H1 (cell line): ENCODE measurements at regions of chr19 and their contacts with region 1.

Region 1: GRCh38 chr19:10602330-10603083 is 15.4 kb upstream of the AP1M2 start:
- DNase-seq: peak in 1 of 2 experiments; percentile 89
- H3K4me3 ChIP-seq: peak overlapping the region; percentile 79 to 98 (median 88)
- H3K27ac ChIP-seq: 0 out of 2 replicates have a peak overlapping the region, but pooled peaks have one; percentile 67
- H3K4me1 ChIP-seq: peaks cover 0 to 11% (median 7%) of the 10 kb centered on the region in 4 experiments; a peak in 6 of 7 replicates
- H3K27me3 ChIP-seq: no peaks in the 10 kb centered on the region
- CTCF ChIP-seq: no peak
- EP300 ChIP-seq: no peak
- POLR2A ChIP-seq: peak in 1 of 2 experiments; percentile 59; a peak in 2 of 3 replicates
- RAD21 ChIP-seq: no peak

Region 2: DNA sequence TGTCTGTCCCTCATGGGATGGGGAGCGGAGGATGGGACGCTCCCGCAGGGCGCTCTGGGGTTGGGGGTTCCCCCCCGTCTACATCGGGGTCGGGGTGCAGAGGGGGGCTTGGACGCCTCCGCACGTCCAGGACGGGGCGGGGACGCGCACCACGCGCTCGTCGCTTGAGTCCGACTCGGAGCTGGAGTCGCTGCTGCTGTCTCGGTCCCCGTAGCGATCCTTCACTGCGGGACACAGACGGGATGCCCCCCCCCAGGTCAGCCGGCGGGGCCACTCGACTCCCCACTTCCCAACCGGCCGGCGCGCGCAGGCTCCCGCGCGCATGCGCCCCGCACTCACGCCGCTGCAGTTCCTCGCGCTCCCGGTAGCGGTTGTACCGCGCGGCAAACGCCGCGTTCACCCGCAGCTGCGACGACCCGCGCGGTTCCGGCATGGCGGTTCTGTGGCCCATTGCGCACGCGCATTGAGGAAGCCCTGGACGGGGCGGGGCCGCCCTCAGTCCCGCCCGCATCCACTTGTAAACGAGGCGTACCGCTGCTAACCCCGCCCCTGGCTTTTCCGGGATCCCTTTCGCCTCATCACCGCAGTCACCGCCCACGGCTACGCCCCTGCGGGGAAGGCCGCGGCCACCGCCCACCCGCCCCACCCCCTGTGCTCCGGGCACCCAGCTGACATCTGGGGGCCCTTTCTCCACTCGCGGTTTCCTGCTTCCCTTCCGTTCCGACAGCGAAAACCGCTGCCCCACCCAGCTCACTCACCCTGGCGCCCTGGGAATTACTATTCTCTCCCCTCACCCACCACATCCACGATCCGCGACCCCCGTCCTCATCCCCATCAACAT is 36.7 kb before region 1 on chr19 and contains the start of gene KRI1:
- CTCF ChIA-PET with region 1: no interaction called
- POLR2A ChIA-PET with region 1: no interaction called
- DNase-seq: peak; percentile 91 to 99
- H3K4me3 ChIP-seq: peak within 1 kb of the TSS; percentile 73 to 82 (median 77)
- H3K27ac ChIP-seq: peak within 1 kb of the TSS; percentile 68; the same call in 1 of the 2 replicates
- H3K4me1 ChIP-seq: peaks cover 0 to 19% (median 9%) of the 10 kb centered on the region in 4 experiments; a peak in 6 of 7 replicates
- H3K27me3 ChIP-seq: peaks cover 0 to 10% (median 7%) of the 10 kb centered on the region in 4 experiments; a peak in 4 of 7 replicates
- CTCF ChIP-seq: peak; percentile 33 to 53 (median 52)
- EP300 ChIP-seq: peak in 1 of 2 experiments; percentile 1; a peak in 1 of 3 replicates
- POLR2A ChIP-seq: peak in 1 of 2 experiments; percentile 73; a peak in 2 of 3 replicates
- RAD21 ChIP-seq: peak in 1 of 2 experiments; percentile 28; a peak in 1 of 4 replicates
- total RNA-seq, gene KRI1: 45.2 and 50.1 TPM in 2 replicates

Region 3: DNA sequence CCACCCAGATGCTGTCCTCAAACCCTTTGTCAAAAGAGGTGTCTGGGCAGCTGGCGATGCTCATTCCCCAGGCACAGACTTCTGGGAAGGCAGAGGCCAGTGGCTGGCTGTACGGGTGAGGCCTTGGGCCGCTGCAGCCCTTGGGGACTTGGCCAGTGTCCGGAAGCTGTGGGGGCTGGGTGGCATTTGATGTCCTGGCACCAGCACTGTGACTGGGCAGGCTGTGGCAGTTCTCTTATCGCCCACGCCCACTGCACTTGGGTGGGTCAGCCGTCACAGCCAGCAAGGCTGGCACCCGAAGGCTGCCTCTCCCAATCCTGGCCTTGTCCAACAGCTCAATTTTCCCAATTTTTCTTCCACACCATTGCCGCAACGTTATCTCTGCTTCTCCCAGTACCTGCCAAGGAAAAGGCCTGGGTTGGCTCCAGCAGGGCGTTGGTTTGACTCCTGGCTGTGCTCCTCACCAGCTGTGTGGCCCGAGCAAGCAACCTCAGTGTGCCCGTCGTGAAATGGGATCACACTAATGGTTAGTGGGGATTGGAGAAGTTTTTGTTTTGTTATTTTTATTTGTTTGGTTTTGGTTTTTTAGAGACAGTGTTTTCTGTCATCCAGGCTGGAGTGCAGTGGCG is 10.1 kb after region 1 on chr19:
- CTCF ChIA-PET with region 1: interaction called, 4 read pairs
- POLR2A ChIA-PET with region 1: interaction called, 15 read pairs
- DNase-seq: no peak
- H3K4me3 ChIP-seq: no peak overlapping the region
- H3K27ac ChIP-seq: no peak overlapping the region
- H3K4me1 ChIP-seq: no peaks in the 10 kb centered on the region
- H3K27me3 ChIP-seq: no peaks in the 10 kb centered on the region
- CTCF ChIP-seq: no peak
- EP300 ChIP-seq: no peak
- POLR2A ChIP-seq: no peak
- RAD21 ChIP-seq: no peak

Region 4: GRCh38 chr19:10625003-10625776 is 22.7 kb after region 1 on chr19 and contains the start of gene SLC44A2:
- CTCF ChIA-PET with region 1: interaction called, 7 read pairs
- POLR2A ChIA-PET with region 1: interaction called, 26 read pairs
- DNase-seq: peak in 1 of 2 experiments; percentile 90
- H3K4me3 ChIP-seq: peak within 1 kb of the TSS; percentile 84 to 92 (median 87)
- H3K27ac ChIP-seq: peak within 1 kb of the TSS; percentile 83
- H3K4me1 ChIP-seq: peaks cover 4 to 9% (median 8%) of the 10 kb centered on the region in 4 experiments
- H3K27me3 ChIP-seq: no peaks in the 10 kb centered on the region
- CTCF ChIP-seq: peak in 1 of 3 experiments; percentile 8; a peak in 1 of 4 replicates
- EP300 ChIP-seq: peak in 1 of 2 experiments; percentile 84; a peak in 1 of 3 replicates
- POLR2A ChIP-seq: peak; percentile 62 to 98
- RAD21 ChIP-seq: peak in 1 of 2 experiments; percentile 6; a peak in 1 of 4 replicates
- total RNA-seq, gene SLC44A2: 118 and 120 TPM in 2 replicates